Activated B cell treated with CpG ODN at 0.5 μM for 24 hours (primary cell): ENCODE measurements at regions of chr13 and their contacts with region 1.

Region 1: GRCh38 chr13:28792992-28793391 is 27.1 kb upstream of the MTUS2 start:
- DNase-seq: no peak
- ATAC-seq: no peak
- H3K4me3 Mint-ChIP-seq: no peak overlapping the region
- H3K27ac Mint-ChIP-seq: no peak overlapping the region
- H3K4me1 Mint-ChIP-seq: no peaks in the 10 kb centered on the region
- H3K27me3 Mint-ChIP-seq: peaks cover 22% of the 10 kb centered on the region
- CTCF ChIP-seq: no peak

Region 2: GRCh38 chr13:27362064-27362883 is 1430.7 kb before region 1 on chr13:
- CTCF ChIA-PET with region 1: no interaction called
- POLR2A ChIA-PET with region 1: no interaction called
- intact Hi-C with region 1: loop called (anchors 2 kb)
- DNase-seq: peak; percentile 73
- ATAC-seq: peak; percentile 92
- H3K4me3 Mint-ChIP-seq: peak overlapping the region; percentile 35
- H3K27ac Mint-ChIP-seq: no peak overlapping the region
- H3K4me1 Mint-ChIP-seq: peaks cover 9% of the 10 kb centered on the region
- H3K27me3 Mint-ChIP-seq: peaks cover 11% of the 10 kb centered on the region
- CTCF ChIP-seq: peak; percentile 65

Region 3: DNA sequence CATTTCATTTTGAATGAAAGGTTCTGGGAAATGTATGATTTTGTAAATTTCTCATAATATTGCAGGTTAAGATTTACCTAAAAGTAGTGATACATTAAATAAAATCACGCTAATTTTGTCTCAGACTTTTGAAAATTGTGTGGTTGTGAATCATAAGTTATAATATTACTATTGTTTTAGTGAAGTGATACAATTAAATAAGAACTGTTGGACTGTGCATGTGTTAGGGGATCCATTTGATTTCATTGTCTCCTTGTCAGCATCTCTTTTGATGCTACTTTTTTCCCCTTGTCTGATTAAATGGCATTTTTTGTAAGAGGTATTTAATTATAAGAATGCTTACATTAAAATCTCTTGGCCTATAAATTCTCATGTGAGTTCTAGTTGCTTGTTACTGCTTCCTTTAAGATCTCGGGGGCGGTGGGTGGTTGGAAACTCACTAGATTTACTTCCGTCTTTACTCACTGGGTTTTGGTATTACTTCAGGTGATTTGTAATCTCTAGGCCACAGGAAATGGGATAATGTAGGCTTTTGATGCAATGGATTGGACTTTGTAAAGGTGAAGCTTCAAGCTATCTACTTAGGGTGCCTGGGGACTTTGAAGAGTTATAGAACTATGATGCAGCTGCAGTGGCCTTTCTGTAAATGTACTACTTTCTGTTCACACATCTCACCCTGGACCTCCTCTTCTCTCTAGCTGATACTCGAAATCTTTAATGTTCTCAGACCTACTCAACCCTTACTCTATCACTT is 588.1 kb before region 1 on chr13:
- CTCF ChIA-PET with region 1: no interaction called
- POLR2A ChIA-PET with region 1: no interaction called
- intact Hi-C with region 1: loop called (anchors 10 kb)
- DNase-seq: no peak
- ATAC-seq: no peak
- H3K4me3 Mint-ChIP-seq: no peak overlapping the region
- H3K27ac Mint-ChIP-seq: no peak overlapping the region
- H3K4me1 Mint-ChIP-seq: peaks cover 21% of the 10 kb centered on the region
- H3K27me3 Mint-ChIP-seq: no peaks in the 10 kb centered on the region
- CTCF ChIP-seq: no peak

Region 4: DNA sequence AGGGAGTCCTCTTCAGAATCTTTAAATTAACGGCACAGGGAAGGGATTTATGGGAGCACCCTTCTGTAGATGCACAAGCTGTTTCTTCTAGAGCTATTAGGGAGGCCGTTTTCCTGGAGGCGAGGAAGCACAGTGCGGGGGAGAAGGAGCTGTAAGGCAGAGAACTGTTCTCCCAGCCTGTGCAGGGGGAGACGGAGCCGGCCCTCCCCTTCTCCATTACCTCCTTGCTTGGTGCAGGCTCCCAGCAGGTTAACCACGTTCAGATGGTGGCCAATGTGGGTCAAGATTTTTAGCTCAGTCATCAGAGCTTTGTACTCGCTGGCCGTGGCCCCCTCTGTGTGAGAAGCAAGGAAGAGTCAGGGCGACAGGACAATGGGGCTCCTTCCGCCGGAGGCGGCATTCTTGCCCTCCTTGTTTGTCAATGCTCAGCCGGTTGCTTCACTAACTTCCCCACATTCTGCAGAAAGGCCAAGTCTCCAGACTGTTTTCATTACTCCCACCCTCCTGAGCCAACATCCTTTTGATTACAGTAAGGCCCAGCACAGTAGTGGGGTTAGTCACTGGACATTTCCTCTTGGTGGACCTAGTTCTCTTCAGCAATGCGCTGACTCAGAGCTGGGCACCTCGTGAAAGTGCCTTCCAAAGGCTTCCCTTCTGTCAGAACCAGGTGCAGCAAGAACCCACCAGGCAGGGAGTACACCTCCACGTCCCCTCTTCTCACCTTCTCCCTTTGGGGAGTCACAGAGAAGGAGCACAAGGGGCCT is 463.4 kb before region 1 on chr13:
- CTCF ChIA-PET with region 1: interaction called, 79 read pairs
- POLR2A ChIA-PET with region 1: no interaction called
- intact Hi-C with region 1: no loop called
- DNase-seq: no peak
- ATAC-seq: no peak
- H3K4me3 Mint-ChIP-seq: no peak overlapping the region
- H3K27ac Mint-ChIP-seq: no peak overlapping the region
- H3K4me1 Mint-ChIP-seq: no peaks in the 10 kb centered on the region
- H3K27me3 Mint-ChIP-seq: no peaks in the 10 kb centered on the region
- CTCF ChIP-seq: no peak

Region 5: GRCh38 chr13:28494776-28495537 is 298.0 kb before region 1 on chr13 and contains the start of gene FLT1:
- CTCF ChIA-PET with region 1: no interaction called
- POLR2A ChIA-PET with region 1: no interaction called
- intact Hi-C with region 1: loop called (anchors 10 kb)
- DNase-seq: peak; percentile 35
- ATAC-seq: peak; percentile 42
- H3K4me3 Mint-ChIP-seq: peak within 1 kb of the TSS; percentile 71
- H3K27ac Mint-ChIP-seq: no peak within 1 kb of the TSS
- H3K4me1 Mint-ChIP-seq: peaks cover 16% of the 10 kb centered on the region
- H3K27me3 Mint-ChIP-seq: peaks cover 29% of the 10 kb centered on the region
- CTCF ChIP-seq: no peak
- total RNA-seq, gene FLT1: 0.46 and 1.3 TPM in 2 replicates